ENCODE measurements at regions of chr5 and their contacts with region 1.

Region 1: GRCh38 chr5:134637161-134637582 is 4.5 kb upstream of the SAR1B start:
- DNase-seq: peak; percentile 61
- H3K4me3 ChIP-seq: no peak overlapping the region
- H3K27ac ChIP-seq: no peak overlapping the region
- H3K4me1 ChIP-seq: no peaks in the 10 kb centered on the region
- H3K27me3 ChIP-seq: no peaks in the 10 kb centered on the region
- CTCF ChIP-seq: no peak

Region 2: GRCh38 chr5:133884569-133885311 is 752.4 kb before region 1 on chr5:
- CTCF ChIA-PET with region 1: no interaction called
- dilution Hi-C with region 1: no loop called
- in situ Hi-C with region 1: no loop called
- intact Hi-C with region 1: no loop called
- DNase-seq: no peak
- H3K4me3 ChIP-seq: no peak overlapping the region
- H3K27ac ChIP-seq: no peak overlapping the region
- H3K4me1 ChIP-seq: no peaks in the 10 kb centered on the region
- H3K27me3 ChIP-seq: no peaks in the 10 kb centered on the region
- CTCF ChIP-seq: no peak

Region 3: DNA sequence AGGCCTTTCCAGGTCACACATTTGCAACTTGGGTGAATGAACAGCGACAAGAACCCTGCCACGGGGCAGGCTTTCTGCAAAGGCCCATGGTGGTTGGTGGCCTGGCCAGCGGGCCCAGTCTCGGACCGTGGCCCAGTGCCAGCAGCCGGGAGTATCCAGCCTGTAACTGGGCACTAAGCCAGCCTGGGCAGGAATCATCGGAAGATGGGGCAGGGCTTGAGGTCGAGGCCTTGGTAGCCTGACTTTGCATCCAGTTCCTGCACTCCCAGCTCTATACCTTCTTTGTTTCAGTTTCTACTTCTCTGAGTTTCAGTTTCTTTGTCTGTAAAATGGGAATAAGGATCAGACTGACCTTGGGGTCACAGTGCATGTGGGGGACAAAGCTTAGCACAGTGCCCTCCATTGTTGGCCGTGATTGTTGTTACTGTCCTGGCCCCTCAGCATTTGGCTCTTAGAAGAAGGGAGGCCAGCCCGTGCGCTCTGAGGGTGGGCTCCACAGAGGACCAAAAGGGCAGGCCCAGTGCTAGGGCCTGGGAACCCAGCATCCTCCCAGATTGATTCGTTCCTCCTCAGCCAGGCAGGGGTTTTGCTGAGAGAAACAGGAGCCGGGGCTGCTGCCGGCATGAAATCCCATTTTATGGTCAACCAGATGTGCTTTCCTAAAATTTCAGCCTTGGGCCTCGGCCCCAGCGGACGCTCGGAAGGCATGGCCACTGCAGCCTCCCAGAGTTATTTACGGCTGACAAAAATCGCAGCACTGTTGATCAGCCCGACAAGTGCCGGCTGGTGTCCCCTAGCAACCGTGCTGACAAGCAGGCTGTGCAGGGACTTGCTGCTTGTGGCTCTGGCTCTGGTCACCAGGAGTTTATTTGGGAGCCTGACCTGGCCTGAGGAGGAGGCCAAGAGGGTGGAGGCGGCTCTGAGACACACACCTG is 68.1 kb before region 1 on chr5:
- CTCF ChIA-PET with region 1: no interaction called
- dilution Hi-C with region 1: no loop called
- in situ Hi-C with region 1: no loop called
- intact Hi-C with region 1: no loop called
- DNase-seq: no peak
- H3K4me3 ChIP-seq: no peak overlapping the region
- H3K27ac ChIP-seq: no peak overlapping the region
- H3K4me1 ChIP-seq: peaks cover 12% of the 10 kb centered on the region
- H3K27me3 ChIP-seq: no peaks in the 10 kb centered on the region
- CTCF ChIP-seq: no peak

Region 4: DNA sequence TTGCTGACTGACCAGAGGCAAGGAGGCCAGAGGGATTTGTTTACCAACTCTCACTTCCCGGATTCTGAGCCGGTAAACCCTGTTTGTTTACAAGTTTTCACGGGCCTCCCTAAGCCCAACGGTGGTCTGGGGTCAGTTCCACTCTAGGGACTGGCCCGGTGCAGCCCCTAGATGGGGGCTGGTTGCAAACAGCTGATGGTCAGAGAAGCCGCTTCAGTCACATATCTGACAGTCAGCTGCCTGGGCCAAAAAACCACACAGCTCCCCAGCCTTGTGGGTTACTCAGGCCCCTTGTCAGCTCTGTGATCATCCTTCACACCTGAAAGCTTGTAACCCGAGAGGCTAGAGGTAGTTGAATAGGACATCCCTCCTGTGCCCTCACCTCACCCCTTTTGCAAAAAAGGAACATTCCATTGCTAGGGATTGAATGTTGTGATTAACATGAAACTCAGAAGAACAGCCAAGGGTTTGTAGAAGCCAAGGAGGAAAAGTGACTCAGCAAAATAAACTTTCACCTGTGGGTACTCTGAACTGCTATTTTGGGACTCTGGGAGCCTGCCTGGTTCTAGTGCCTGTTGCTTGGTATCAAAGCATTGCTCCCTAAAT is 44.9 kb before region 1 on chr5:
- CTCF ChIA-PET with region 1: no interaction called
- dilution Hi-C with region 1: loop called (anchors 5 kb)
- in situ Hi-C with region 1: no loop called
- intact Hi-C with region 1: no loop called
- DNase-seq: peak; percentile 86
- H3K4me3 ChIP-seq: no peak overlapping the region
- H3K27ac ChIP-seq: no peak overlapping the region
- H3K4me1 ChIP-seq: peaks cover 22% of the 10 kb centered on the region
- H3K27me3 ChIP-seq: no peaks in the 10 kb centered on the region
- CTCF ChIP-seq: no peak

Region 5: GRCh38 chr5:134648425-134649162 is 11.4 kb after region 1 on chr5 and contains the start of gene SEC24A:
- CTCF ChIA-PET with region 1: no interaction called
- dilution Hi-C with region 1: no loop called
- in situ Hi-C with region 1: no loop called
- intact Hi-C with region 1: loop called (anchors 1 kb)
- DNase-seq: peak; percentile 96
- H3K4me3 ChIP-seq: peak within 1 kb of the TSS; percentile 90 to 100 (median 99)
- H3K27ac ChIP-seq: peak within 1 kb of the TSS; percentile 98
- H3K4me1 ChIP-seq: no peaks in the 10 kb centered on the region
- H3K27me3 ChIP-seq: no peaks in the 10 kb centered on the region
- CTCF ChIP-seq: no peak
- total RNA-seq, gene SEC24A: 20.4 to 20.8 TPM

Measured in mammary epithelial cell (primary cell).